Left colon (tissue), 2 donors: ENCODE measurements at regions of chr20 and their contacts with region 1.

Region 1: DNA sequence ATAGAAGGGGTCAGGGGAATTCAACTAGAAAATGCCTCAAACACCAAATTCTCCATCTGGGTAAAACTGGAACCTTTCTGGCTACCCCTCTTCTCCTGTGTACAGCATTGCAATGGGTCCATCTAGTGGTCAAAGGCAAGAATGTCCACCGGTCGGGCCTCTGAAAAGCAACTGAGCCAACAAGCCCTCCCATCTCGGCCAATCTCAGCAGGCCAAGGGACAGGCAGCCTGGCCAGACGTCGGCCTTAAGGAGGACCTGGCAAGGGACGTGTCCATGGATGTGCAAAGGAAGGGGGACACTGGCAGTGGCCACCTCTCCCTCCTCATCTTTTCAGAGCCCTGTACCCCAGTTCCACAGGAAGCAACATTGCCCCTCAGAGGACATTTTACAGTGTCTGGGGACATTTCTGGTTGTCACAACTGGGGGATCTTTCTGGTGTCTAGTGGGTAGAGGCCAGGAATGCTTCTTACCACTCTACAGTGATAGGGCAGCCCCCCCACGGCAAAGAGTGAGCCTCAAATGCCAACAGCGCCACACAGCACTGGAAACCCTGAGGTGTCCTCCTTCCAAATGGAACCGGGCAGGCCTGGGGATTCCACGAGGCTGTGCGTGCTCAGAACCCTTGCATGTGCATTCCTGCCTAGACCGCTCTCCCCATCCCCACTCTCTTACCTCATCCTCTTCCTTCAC is 99.8 kb upstream of the FOXA2 start:
- DNase-seq: peak; percentile 41 to 55
- ATAC-seq: peak; percentile 86

Region 2: GRCh38 chr20:22160253-22160652 is 524.0 kb before region 1 on chr20:
- intact Hi-C with region 1: no loop called
- DNase-seq: no peak
- ATAC-seq: no peak

Region 3: DNA sequence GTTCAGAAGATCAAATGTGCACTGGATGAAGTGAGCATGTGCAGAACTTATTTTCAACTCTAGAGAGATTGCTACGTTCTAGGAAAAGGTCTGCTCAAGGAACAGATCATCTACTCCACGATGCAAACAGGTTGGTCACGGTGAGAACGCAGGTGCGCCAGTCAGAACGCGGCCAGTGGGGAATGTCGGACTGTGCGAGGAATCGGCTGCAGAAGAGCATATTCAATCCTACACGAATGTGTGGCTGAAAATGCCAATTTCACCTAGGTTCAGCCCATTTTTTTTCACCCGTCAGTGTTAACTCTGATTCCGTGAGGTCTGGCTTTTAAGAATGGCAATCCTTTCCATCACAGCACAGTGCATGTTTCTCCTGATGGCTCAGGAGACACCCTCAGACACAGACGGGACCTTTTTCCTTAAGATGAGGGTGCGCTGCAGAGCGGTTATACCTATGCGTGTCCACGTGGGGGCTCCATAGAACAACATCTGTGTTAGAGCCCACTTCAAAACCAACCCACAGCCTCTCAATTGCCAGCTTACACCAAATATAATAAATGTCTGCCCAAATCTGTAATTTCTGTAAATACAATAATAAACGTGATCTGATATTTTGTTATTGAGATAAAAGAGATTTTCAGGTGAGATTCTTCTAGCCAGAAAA is 350.2 kb before region 1 on chr20:
- intact Hi-C with region 1: loop called (anchors 2 to 5 kb)
- DNase-seq: peak; percentile 40 to 46
- ATAC-seq: peak; percentile 87

Region 4: DNA sequence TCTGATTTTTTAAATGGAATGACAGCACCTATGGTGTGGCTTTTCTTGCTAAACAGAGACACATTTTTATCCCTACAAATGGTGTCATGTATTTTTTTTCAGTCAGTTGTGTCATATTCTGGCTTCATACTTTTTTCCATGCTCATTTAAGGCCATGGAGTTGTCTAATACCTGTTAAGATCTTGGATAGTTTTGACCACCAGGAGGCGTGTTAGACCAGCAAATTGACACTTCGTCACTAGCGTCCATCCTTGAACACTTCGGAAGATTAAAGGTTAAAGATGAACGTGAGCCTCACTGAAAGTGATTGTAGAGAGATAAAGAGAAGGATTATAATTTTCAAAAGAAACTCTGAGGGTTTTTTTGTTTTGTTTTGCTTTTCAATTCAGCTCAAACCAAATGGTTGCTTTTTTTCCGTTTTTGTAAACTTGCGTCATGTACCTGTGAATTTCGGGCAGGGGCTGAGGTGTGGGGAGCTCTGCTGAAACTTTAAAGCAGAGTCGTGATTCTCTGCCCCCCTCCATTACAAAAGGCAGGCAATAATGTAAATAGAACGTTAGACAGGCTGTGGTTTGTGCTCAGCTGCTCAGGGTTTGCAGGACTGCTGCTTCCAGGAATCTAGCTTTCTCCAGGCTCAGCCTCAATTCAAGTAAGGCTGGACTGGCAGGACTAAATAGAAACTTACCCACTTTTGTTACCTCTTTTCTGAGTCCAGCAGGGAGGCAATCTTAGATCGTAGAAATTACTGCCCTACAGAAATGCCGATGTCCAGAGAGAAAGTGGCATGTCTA is 344.9 kb before region 1 on chr20:
- intact Hi-C with region 1: loop called (anchors 2 to 5 kb)
- DNase-seq: peak in 1 of 2 donors; percentile 50
- ATAC-seq: peak; percentile 81

Region 5: DNA sequence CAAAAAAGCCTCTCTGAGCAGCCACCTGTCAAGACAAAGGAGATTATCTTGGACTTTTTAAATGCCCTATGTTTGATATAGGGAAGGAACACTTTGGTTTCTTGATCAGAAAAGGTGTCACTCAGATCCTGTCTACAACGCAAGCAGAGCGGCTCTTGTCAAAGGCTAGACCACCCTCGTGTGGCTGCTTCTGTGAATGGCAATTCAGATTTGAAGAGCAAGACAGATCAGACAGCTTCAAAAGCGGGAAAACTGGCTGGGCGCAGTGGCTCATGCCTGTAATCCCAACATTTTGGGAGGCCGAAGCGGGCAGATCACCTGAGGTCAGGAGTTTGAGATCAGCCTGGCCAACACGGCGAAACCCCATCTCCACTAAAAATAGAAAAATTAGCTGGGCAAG is 656.3 kb after region 1 on chr20:
- intact Hi-C with region 1: loop called in 1 of 2 experiments (anchors 5 kb)
- DNase-seq: peak in 1 of 2 donors; percentile 34
- ATAC-seq: no peak

Region 6: GRCh38 chr20:23606652-23607049 is 922.4 kb after region 1 on chr20:
- intact Hi-C with region 1: loop called in 1 of 2 experiments (anchors 10 kb)
- DNase-seq: peak; percentile 60 to 77
- ATAC-seq: peak; percentile 97